ENCODE measurements at regions of chr3 and their contacts with region 1.

Region 1: GRCh38 chr3:59575113-59576001 is 525.5 kb upstream of the CFAP20DC start:
- DNase-seq: peak; percentile 69
- ATAC-seq: peak; percentile 88
- H3K4me3 ChIP-seq: no peak overlapping the region
- H3K27ac ChIP-seq: 0 out of 2 replicates have a peak overlapping the region, but pooled peaks have one; percentile 7
- H3K4me1 ChIP-seq: peaks cover 9% of the 10 kb centered on the region
- H3K27me3 ChIP-seq: no peaks in the 10 kb centered on the region
- CTCF ChIP-seq: peak; percentile 88
- POLR2A ChIP-seq: no peak
- RAD21 ChIP-seq: peak; percentile 91

Region 2: GRCh38 chr3:59212128-59212779 is 363.1 kb before region 1 on chr3:
- CTCF ChIA-PET with region 1: no interaction called
- POLR2A ChIA-PET with region 1: no interaction called
- dilution Hi-C with region 1: no loop called
- in situ Hi-C with region 1: loop called (anchors 5 kb)
- intact Hi-C with region 1: loop called (anchors 1 kb)
- DNase-seq: peak; percentile 60
- ATAC-seq: peak; percentile 97
- H3K4me3 ChIP-seq: no peak overlapping the region
- H3K27ac ChIP-seq: no peak overlapping the region
- H3K4me1 ChIP-seq: no peaks in the 10 kb centered on the region; the same call in 1 of the 2 replicates
- H3K27me3 ChIP-seq: no peaks in the 10 kb centered on the region
- CTCF ChIP-seq: peak; percentile 78
- POLR2A ChIP-seq: no peak
- RAD21 ChIP-seq: peak; percentile 85

Region 3: DNA sequence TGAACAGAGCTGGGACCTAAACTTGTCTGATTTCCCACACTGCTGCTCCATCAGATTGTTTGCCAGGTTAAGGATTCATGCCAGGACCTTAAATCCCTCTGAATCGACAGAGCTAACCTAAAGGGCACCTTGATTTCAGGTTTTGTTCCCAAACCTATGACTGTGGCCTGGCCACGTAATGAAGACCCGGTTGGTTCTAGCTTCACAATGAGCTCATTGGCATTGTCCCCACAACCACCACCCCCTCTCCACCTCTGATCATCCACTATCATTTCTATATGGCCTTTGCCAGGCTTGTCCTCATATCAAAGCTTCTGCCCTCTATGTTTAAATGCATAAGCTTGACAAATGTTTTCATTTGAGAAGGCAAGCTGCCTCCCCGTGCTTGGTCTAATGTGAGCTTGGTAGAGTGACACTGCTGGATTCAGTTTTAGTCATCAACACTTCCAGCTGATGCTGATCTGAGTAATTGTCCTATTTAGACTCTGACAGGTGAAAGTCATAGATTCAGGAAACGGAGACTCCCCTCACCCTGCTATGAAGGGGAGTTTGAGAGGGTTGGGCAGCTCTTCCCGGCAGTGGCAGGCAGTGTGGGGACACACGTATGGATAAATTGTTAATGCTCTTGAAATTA is 118.4 kb before region 1 on chr3:
- CTCF ChIA-PET with region 1: no interaction called
- POLR2A ChIA-PET with region 1: no interaction called
- dilution Hi-C with region 1: no loop called
- in situ Hi-C with region 1: no loop called
- intact Hi-C with region 1: no loop called
- DNase-seq: no peak
- ATAC-seq: no peak
- H3K4me3 ChIP-seq: no peak overlapping the region
- H3K27ac ChIP-seq: no peak overlapping the region
- H3K4me1 ChIP-seq: no peaks in the 10 kb centered on the region
- H3K27me3 ChIP-seq: no peaks in the 10 kb centered on the region; the same call in 1 of the 2 replicates
- CTCF ChIP-seq: no peak
- POLR2A ChIP-seq: no peak
- RAD21 ChIP-seq: no peak

Region 4: GRCh38 chr3:59621037-59621436 is 45.7 kb after region 1 on chr3:
- CTCF ChIA-PET with region 1: no interaction called
- POLR2A ChIA-PET with region 1: no interaction called
- dilution Hi-C with region 1: no loop called
- in situ Hi-C with region 1: no loop called
- intact Hi-C with region 1: no loop called
- DNase-seq: no peak
- ATAC-seq: no peak
- H3K4me3 ChIP-seq: no peak overlapping the region
- H3K27ac ChIP-seq: no peak overlapping the region
- H3K4me1 ChIP-seq: no peaks in the 10 kb centered on the region
- H3K27me3 ChIP-seq: no peaks in the 10 kb centered on the region
- CTCF ChIP-seq: no peak
- POLR2A ChIP-seq: no peak
- RAD21 ChIP-seq: no peak

Region 5: GRCh38 chr3:59766200-59766872 is 191.0 kb after region 1 on chr3:
- CTCF ChIA-PET with region 1: no interaction called
- POLR2A ChIA-PET with region 1: no interaction called
- dilution Hi-C with region 1: no loop called
- in situ Hi-C with region 1: no loop called
- intact Hi-C with region 1: loop called (anchors 1 kb)
- DNase-seq: peak; percentile 93
- ATAC-seq: peak; percentile 73
- H3K4me3 ChIP-seq: no peak overlapping the region
- H3K27ac ChIP-seq: peak overlapping the region; percentile 95; the same call in 1 of the 2 replicates
- H3K4me1 ChIP-seq: peaks cover 12% of the 10 kb centered on the region
- H3K27me3 ChIP-seq: no peaks in the 10 kb centered on the region
- CTCF ChIP-seq: no peak
- POLR2A ChIP-seq: no peak
- RAD21 ChIP-seq: no peak

Region 6: DNA sequence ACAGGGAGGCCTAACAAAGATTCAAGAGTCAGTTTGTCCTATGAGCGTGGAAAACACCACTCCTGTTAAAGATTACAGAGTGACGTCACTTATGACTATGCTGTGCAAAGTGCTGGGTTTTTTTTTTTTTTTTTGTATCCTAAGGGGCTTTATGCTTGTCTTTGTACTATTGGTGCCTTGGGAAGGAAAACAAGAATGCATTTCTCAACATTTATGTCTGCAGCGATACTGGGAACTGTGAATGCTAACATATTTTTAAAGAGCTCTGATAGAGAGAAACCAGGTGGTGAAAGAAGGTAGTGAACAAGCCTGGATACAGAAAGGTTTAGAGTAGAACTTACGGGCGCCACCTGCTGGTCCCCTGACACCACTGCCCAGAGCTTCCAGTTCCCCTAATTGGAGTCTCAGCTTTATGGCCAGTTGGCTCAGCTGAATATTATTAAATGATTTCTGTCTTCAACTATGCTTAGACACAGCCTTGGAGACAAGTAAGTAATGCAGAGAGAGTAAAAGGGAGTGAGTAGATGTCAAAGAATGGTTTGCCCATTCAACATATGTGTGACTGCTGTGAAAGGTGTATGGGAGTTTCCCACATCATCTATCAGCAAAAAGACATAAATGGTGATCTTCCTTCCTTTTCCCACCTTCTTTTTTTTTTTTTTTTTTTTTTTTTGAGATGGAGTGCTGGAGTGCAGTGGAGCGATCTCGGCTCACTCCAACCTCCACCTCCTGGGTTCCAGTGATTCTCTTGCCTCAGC is 282.4 kb after region 1 on chr3:
- CTCF ChIA-PET with region 1: interaction called, 10 read pairs
- POLR2A ChIA-PET with region 1: no interaction called
- dilution Hi-C with region 1: no loop called
- in situ Hi-C with region 1: loop called (anchors 5 kb)
- intact Hi-C with region 1: loop called (anchors 1 kb)
- DNase-seq: peak; percentile 81
- ATAC-seq: peak; percentile 99
- H3K4me3 ChIP-seq: no peak overlapping the region
- H3K27ac ChIP-seq: no peak overlapping the region
- H3K4me1 ChIP-seq: no peaks in the 10 kb centered on the region
- H3K27me3 ChIP-seq: no peaks in the 10 kb centered on the region
- CTCF ChIP-seq: peak; percentile 96
- POLR2A ChIP-seq: no peak
- RAD21 ChIP-seq: peak; percentile 90

Region 7: GRCh38 chr3:60431599-60431958 is 856.2 kb after region 1 on chr3:
- CTCF ChIA-PET with region 1: no interaction called
- POLR2A ChIA-PET with region 1: no interaction called
- dilution Hi-C with region 1: no loop called
- in situ Hi-C with region 1: no loop called
- intact Hi-C with region 1: loop called (anchors 5 kb)
- DNase-seq: peak; percentile 48
- ATAC-seq: peak; percentile 85
- H3K4me3 ChIP-seq: no peak overlapping the region
- H3K27ac ChIP-seq: no peak overlapping the region
- H3K4me1 ChIP-seq: no peaks in the 10 kb centered on the region
- H3K27me3 ChIP-seq: no peaks in the 10 kb centered on the region
- CTCF ChIP-seq: peak; percentile 28
- POLR2A ChIP-seq: no peak
- RAD21 ChIP-seq: peak; percentile 39